H1 (cell line): ENCODE measurements at regions of chr2 and their contacts with region 1.

Region 1: DNA sequence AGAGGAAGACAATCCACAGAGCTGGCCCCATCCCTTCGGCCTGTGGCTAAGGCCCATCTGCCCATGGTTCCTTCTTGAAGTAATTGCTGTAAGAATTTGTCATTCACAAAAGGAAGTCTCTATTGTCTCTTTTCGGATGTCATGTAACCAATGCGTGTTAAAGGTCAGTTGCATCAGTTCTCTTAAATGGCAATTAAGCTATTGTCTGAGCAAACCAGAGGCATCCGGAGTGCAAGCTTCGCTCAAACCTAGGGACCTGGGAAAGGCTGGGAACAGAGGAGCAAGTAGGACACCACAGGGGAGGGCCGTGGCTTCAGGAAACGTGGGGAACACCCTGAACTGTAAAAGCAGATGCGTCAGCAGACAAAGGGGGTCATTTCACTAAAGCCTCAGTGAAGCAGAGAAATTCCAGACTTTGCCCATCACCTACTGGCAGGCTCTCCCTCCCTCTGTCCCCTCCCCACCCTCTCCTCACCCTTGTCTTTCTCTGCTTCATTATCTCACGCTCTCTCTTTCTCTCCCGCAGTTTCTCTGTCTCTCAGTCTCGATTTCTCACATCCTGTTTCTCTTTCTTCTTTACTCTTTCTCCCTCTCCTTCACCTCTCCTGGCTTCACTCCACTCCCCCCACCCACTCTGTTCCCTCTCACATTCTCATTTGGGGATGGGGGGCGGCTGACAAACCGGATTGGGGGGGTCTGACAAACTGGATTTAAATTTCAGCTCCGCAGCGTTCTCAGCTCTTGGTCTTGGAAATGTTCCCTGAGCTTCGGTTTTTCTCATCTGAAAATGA is 204.6 kb upstream of the TNP1 start:
- DNase-seq: peak in 1 of 2 experiments; percentile 13
- H3K4me3 ChIP-seq: no peak overlapping the region
- H3K27ac ChIP-seq: no peak overlapping the region
- H3K4me1 ChIP-seq: peaks cover 2 to 10% (median 3%) of the 10 kb centered on the region in 4 experiments; a peak in 3 of 7 replicates
- H3K27me3 ChIP-seq: no peaks in the 10 kb centered on the region
- CTCF ChIP-seq: no peak
- EP300 ChIP-seq: no peak
- POLR2A ChIP-seq: no peak
- RAD21 ChIP-seq: no peak

Region 2: GRCh38 chr2:217049956-217050355 is 14.5 kb before region 1 on chr2:
- CTCF ChIA-PET with region 1: interaction called, 32 read pairs
- POLR2A ChIA-PET with region 1: interaction called, 6 read pairs
- DNase-seq: no peak
- H3K4me3 ChIP-seq: no peak overlapping the region
- H3K27ac ChIP-seq: no peak overlapping the region
- H3K4me1 ChIP-seq: no peaks in the 10 kb centered on the region
- H3K27me3 ChIP-seq: no peaks in the 10 kb centered on the region; a peak in 1 of 7 replicates
- CTCF ChIP-seq: no peak
- EP300 ChIP-seq: no peak
- POLR2A ChIP-seq: no peak
- RAD21 ChIP-seq: no peak